Esophagus muscularis mucosa (tissue), 4 donors: ENCODE measurements at regions of chr19 and their contacts with region 1.

Region 1: DNA sequence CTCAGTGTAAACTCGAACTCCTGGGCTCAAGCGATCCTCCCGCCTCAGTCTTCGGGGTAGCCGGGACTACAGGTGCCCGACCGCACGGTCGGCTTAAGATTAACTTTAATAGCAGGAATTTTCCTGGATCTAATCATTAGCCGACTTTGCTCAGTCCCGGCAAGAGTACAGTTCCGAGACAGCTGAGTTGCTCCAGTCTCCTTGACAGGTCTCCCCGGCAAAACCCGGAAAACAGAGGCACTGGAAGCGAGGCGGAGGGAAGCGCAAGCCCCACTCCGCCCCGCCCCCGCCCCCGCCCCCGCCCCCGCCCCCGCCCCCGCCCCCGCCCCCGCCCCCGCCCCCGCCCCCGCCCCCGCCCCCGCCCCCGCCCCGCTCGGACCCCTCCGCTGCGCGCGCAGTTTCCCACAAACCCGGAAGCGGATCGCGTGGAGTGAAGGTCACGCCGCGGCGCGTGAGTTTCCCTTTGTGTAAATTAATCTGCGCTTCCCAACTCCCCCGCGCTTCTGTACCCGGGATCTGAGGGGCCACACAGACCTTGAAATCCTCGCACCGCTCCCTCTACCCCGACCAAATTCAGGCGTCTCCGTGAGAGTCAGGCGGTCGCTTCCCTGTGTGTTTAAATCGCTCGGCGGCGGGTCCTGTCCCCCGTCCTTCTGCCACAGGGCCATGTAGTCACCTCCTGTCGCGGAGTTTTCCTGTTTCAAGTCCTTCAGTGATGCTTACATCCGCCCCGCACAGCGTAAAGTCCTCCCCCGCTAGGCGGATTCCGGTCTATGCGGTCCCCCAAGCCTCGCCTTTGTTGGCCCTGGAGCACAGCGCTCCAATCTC is at the start of gene ZNF480:
- DNase-seq: peak; percentile 93
- H3K4me3 ChIP-seq: peak within 1 kb of the TSS; percentile 86 to 89 (median 86)
- H3K27ac ChIP-seq: peak within 1 kb of the TSS; percentile 89 to 97 (median 94)
- H3K4me1 ChIP-seq: peaks cover 15 to 21% (median 19%) of the 10 kb centered on the region in 4 donors
- H3K27me3 ChIP-seq: no peaks in the 10 kb centered on the region
- CTCF ChIP-seq: peak in 2 of 3 experiments; percentile 12 to 16
- EP300 ChIP-seq: no peak
- POLR2A ChIP-seq: no peak
- total RNA-seq, gene ZNF480: 6.0 to 10.0 (median 7.2) TPM

Region 2: GRCh38 chr19:52269338-52270261 is 27.4 kb before region 1 on chr19 and contains the start of gene ZNF766:
- intact Hi-C with region 1: loop called (anchors 1 kb)
- DNase-seq: peak; percentile 100
- H3K4me3 ChIP-seq: peak within 1 kb of the TSS; percentile 92 to 100 (median 98)
- H3K27ac ChIP-seq: peak within 1 kb of the TSS; percentile 98 to 99 (median 98)
- H3K4me1 ChIP-seq: peaks cover 15 to 28% (median 27%) of the 10 kb centered on the region in 4 donors
- H3K27me3 ChIP-seq: no peaks in the 10 kb centered on the region
- CTCF ChIP-seq: no peak
- EP300 ChIP-seq: no peak
- POLR2A ChIP-seq: peak; percentile 72
- total RNA-seq, gene ZNF766: 8.3 to 13.9 (median 10.8) TPM